ENCODE measurements at regions of chr3 and their contacts with region 1.

Region 1: DNA sequence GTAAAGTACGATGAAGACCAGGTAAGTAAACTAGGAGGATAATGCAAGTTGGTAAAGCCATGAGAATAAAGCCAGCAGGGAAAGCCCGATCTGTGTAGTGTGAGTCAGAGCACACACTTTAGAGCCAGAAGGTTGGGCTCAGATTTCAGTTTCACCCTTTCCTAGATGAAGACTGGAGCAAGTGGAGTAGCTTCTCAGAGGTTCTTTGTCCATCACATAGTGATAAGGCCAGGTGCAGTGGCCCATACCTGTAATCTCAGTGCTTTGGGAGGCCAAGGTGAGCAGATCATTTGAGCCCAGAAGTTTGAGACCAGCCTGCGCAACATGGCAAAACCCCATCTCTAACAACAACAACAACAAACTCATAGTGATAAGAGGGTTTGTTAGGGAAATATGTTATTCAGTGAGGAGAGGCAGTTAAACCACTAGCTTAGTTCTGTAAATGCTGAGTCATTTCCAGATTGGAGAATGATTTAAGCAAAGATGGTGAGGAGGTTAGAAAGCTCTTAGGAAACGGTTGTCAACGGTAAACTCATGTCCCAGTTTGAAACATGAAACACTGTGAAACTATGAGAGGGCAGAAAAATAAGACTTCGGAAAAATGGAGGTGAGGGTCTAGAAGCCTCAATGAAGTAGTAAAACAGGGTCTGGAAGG is 39.0 kb downstream of the IL12A start:
- DNase-seq: no peak
- H3K4me3 ChIP-seq: no peak overlapping the region
- H3K27ac ChIP-seq: no peak overlapping the region
- H3K4me1 ChIP-seq: no peaks in the 10 kb centered on the region
- H3K27me3 ChIP-seq: no peaks in the 10 kb centered on the region
- CTCF ChIP-seq: no peak

Region 2: GRCh38 chr3:160413613-160414248 is 386.1 kb after region 1 on chr3:
- intact Hi-C with region 1: loop called (anchors 5 kb)
- DNase-seq: no peak
- H3K4me3 ChIP-seq: no peak overlapping the region
- H3K27ac ChIP-seq: no peak overlapping the region
- H3K4me1 ChIP-seq: no peaks in the 10 kb centered on the region
- H3K27me3 ChIP-seq: no peaks in the 10 kb centered on the region
- CTCF ChIP-seq: peak; percentile 91